WTC11 (cell line): ENCODE measurements at regions of chr7 and their contacts with region 1.

Region 1: DNA sequence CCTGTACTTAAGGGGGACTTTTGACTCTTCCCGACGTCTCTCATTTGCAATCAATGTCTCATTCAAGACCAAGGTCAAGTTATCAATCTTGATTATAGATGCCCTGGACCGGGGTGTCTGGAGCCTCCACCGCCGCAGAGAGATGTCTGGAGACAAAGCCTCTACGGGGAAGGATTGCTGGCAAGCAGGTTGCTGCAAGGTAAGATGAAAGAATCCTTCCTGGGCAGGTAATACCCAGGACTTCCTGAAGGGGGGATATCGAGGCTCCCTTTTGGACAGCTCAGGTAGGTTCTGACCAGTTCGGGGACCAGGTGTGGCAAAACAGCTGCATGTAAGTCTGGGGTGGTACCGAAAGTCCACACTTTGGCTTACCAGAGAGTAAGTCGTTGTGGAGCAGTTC is 12.5 kb upstream of the CUX1 start:
- DNase-seq: peak; percentile 73
- ATAC-seq: peak; percentile 90
- H3K4me3 Mint-ChIP-seq: peak overlapping the region; percentile 62
- H3K27ac Mint-ChIP-seq: no peak overlapping the region
- H3K4me1 Mint-ChIP-seq: peaks cover 23% of the 10 kb centered on the region
- H3K27me3 Mint-ChIP-seq: peaks cover 17% of the 10 kb centered on the region
- CTCF ChIP-seq: peak; percentile 82

Region 2: GRCh38 chr7:101702362-101702850 is 102.6 kb before region 1 on chr7:
- CTCF ChIA-PET with region 1: interaction called, 12 read pairs
- POLR2A ChIA-PET with region 1: no interaction called
- DNase-seq: no peak
- ATAC-seq: peak; percentile 83
- H3K4me3 Mint-ChIP-seq: no peak overlapping the region
- H3K27ac Mint-ChIP-seq: peak overlapping the region; percentile 67
- H3K4me1 Mint-ChIP-seq: peaks cover 6% of the 10 kb centered on the region
- H3K27me3 Mint-ChIP-seq: no peaks in the 10 kb centered on the region
- CTCF ChIP-seq: no peak

Region 3: GRCh38 chr7:101743241-101743994 is 61.5 kb before region 1 on chr7:
- CTCF ChIA-PET with region 1: interaction called, 17 read pairs
- POLR2A ChIA-PET with region 1: interaction called, 3 read pairs
- DNase-seq: peak; percentile 81
- ATAC-seq: peak; percentile 84
- H3K4me3 Mint-ChIP-seq: peak overlapping the region; percentile 76
- H3K27ac Mint-ChIP-seq: peak overlapping the region; percentile 81
- H3K4me1 Mint-ChIP-seq: peaks cover 37% of the 10 kb centered on the region
- H3K27me3 Mint-ChIP-seq: no peaks in the 10 kb centered on the region
- CTCF ChIP-seq: no peak

Region 4: DNA sequence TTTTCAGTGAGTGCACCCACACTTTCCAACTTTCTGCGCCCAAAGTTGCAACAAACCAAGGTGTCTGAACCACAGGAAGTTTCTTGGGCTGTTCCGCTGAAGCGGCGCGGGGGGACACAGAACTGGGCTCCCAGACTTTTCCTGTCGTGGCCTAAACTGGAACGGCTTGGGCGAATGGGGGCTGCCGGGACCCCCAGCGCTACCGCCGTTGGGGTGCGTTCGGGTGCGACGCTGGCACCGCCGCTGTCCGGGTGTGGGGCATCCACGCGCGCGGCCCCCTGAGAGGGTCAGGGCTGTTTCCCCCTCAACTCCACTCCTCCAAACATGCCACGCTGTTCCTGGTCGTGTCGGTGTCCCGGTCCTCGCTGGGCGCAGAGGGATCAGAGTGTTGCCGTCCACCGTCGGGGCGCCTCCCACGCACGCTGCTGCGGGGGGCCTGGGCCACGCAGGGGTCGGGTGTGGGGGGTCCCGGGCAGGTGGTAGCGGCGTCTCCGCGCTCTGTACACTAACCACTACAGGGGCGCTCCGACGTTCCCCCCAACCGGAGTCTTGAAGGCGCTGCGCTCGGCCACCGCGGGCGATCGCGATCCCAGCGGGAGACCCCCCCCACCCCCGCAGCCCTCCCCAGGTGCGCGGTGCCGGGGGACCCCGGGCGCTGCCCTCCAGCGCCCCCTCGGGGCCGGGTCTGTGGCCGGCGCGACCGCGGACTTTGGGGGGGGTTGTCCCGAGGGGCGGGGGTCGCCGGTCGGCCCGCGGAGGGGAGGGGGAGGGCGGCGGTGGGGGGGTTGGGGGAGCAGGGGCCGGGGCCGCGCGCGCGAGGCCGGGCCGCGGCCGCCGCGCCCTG is 10.2 kb after region 1 on chr7:
- CTCF ChIA-PET with region 1: interaction called, 15 read pairs
- POLR2A ChIA-PET with region 1: no interaction called
- DNase-seq: peak; percentile 64
- ATAC-seq: peak; percentile 29
- H3K4me3 Mint-ChIP-seq: peak overlapping the region; percentile 70
- H3K27ac Mint-ChIP-seq: no peak overlapping the region
- H3K4me1 Mint-ChIP-seq: peaks cover 38% of the 10 kb centered on the region
- H3K27me3 Mint-ChIP-seq: peaks cover 9% of the 10 kb centered on the region
- CTCF ChIP-seq: peak; percentile 44

Region 5: GRCh38 chr7:101863598-101863997 is 58.6 kb after region 1 on chr7:
- CTCF ChIA-PET with region 1: no interaction called
- POLR2A ChIA-PET with region 1: no interaction called
- DNase-seq: no peak
- ATAC-seq: no peak
- H3K4me3 Mint-ChIP-seq: no peak overlapping the region
- H3K27ac Mint-ChIP-seq: peak overlapping the region; percentile 78
- H3K4me1 Mint-ChIP-seq: peaks cover 83% of the 10 kb centered on the region
- H3K27me3 Mint-ChIP-seq: no peaks in the 10 kb centered on the region
- CTCF ChIP-seq: no peak

Region 6: DNA sequence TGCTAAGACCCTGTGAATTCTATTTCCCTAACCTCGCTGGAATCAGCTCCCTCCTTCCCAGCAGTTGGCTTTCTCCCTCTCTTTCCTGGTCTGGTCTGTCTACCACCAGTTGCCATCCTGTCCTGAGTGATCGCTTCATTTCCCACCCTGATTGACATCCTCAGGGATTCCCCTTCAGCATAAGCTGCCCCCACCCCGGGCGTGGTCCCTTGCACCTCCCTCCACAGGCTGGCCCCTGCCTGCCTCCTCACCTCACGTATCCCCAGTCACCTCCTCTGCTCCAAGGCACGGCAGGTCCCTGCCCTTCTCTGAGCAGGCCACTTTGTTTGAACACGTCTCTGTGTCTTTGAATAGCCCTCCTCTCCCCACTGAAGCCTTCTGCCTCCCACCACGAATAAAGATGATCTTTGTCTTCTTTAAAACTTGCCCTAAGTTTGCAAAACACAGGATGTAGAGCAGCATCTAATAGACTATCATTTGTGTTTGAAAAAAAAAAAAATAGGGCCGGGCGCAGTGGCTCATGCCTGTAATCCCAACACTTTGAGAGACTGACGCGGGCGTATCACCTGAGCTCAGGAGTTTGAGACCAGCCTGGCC is 246.0 kb after region 1 on chr7:
- CTCF ChIA-PET with region 1: no interaction called
- POLR2A ChIA-PET with region 1: no interaction called
- DNase-seq: no peak
- ATAC-seq: no peak; the same call in 1 of the 2 replicates
- H3K4me3 Mint-ChIP-seq: no peak overlapping the region
- H3K27ac Mint-ChIP-seq: peak overlapping the region; percentile 66
- H3K4me1 Mint-ChIP-seq: peaks cover 14% of the 10 kb centered on the region
- H3K27me3 Mint-ChIP-seq: no peaks in the 10 kb centered on the region
- CTCF ChIP-seq: no peak